ENCODE measurements at regions of chr7 and their contacts with region 1.

Region 1: DNA sequence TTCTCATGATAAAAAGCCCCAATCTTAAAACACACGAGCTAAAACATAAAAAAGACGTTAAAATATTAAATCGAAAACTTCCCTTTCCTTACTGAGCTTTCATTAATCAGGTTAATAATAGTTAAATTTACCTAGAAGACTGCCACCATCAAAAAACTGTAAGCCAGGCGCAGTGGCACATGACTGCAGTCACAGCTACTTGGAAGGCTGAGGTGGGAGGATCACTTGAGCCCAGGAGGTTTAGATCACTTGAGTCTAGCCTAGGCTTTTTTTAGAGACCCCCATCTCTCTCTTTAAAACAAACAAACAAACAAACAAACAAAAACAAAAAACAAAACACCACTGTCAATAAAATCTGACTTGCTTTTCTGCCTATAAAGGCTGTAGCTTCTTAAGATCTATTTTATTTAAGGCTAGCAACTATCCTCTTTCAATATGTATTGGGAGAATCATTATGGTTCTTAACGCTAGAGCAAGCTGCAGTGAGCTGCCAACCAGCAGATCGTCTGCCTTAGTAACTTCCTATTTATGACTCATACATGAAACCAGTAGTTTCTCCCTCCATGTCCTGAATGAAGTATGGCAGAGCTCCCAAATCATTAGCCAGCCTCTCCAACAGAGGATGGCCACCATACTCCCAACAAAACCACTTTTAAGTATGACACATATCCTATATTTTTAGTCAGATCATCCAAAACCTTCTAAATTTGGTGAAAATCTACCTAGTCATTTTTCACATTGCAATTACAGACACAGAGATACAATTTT is 163.7 kb downstream of the SRPK2 start:
- DNase-seq: peak; percentile 95
- ATAC-seq: peak; percentile 94
- H3K4me3 ChIP-seq: no peak overlapping the region
- H3K27ac ChIP-seq: no peak overlapping the region
- H3K4me1 ChIP-seq: peaks cover 4% of the 10 kb centered on the region
- H3K27me3 ChIP-seq: no peaks in the 10 kb centered on the region
- CTCF ChIP-seq: no peak
- POLR2A ChIP-seq: no peak
- RAD21 ChIP-seq: no peak

Region 2: DNA sequence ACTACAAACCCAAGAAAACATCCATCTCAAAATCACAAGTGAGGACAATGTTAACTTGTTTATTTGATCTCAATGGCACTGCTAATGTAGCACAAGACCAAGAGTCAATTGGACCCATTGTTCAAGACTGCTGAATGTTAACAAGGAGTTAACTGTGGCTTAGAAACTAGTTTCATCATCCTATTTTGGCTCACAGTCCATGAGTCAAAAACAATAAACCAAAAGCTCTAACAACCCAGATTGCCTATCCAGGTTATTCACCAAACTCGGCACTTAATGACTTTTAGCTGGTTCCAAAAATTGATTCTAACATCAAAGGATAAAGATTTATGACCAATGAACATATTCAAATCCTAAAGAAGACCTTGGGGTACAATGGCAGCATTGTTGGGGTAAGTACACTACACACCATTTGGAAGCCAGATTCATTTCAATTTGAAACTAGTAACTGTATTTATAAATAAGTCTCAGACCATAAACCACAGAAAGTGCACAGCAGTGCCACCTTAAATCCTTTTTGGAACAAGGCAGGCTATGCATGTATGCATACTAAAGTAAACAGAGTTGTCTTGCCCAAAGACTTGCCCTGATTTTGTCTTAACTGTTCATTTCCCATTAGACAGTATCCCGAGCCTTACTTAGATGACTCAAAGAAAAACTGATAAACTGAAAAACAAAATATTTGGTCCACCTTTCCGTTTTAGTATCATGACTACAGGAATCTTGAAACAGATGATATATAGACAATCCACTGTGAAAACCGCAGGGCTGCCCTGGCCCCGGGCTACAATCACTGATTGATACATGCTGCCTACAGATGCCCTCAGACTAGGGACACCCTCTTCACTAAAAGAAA is 79.2 kb after region 1 on chr7:
- CTCF ChIA-PET with region 1: no interaction called
- POLR2A ChIA-PET with region 1: no interaction called
- dilution Hi-C with region 1: no loop called
- in situ Hi-C with region 1: no loop called
- intact Hi-C with region 1: loop called (anchors 10 kb)
- DNase-seq: peak; percentile 77
- ATAC-seq: peak; percentile 89
- H3K4me3 ChIP-seq: no peak overlapping the region
- H3K27ac ChIP-seq: no peak overlapping the region
- H3K4me1 ChIP-seq: peaks cover 5% of the 10 kb centered on the region
- H3K27me3 ChIP-seq: no peaks in the 10 kb centered on the region
- CTCF ChIP-seq: no peak
- POLR2A ChIP-seq: no peak
- RAD21 ChIP-seq: no peak

Region 3: GRCh38 chr7:105315357-105315756 is 90.3 kb after region 1 on chr7:
- CTCF ChIA-PET with region 1: no interaction called
- POLR2A ChIA-PET with region 1: no interaction called
- dilution Hi-C with region 1: no loop called
- in situ Hi-C with region 1: no loop called
- intact Hi-C with region 1: no loop called
- DNase-seq: no peak
- ATAC-seq: no peak
- H3K4me3 ChIP-seq: no peak overlapping the region
- H3K27ac ChIP-seq: no peak overlapping the region
- H3K4me1 ChIP-seq: peaks cover 2% of the 10 kb centered on the region; the same call in 1 of the 2 replicates
- H3K27me3 ChIP-seq: no peaks in the 10 kb centered on the region
- CTCF ChIP-seq: no peak
- POLR2A ChIP-seq: no peak
- RAD21 ChIP-seq: no peak

Measured in IMR-90 (cell line).